ENCODE measurements at regions of chr1 and their contacts with region 1.

Region 1: DNA sequence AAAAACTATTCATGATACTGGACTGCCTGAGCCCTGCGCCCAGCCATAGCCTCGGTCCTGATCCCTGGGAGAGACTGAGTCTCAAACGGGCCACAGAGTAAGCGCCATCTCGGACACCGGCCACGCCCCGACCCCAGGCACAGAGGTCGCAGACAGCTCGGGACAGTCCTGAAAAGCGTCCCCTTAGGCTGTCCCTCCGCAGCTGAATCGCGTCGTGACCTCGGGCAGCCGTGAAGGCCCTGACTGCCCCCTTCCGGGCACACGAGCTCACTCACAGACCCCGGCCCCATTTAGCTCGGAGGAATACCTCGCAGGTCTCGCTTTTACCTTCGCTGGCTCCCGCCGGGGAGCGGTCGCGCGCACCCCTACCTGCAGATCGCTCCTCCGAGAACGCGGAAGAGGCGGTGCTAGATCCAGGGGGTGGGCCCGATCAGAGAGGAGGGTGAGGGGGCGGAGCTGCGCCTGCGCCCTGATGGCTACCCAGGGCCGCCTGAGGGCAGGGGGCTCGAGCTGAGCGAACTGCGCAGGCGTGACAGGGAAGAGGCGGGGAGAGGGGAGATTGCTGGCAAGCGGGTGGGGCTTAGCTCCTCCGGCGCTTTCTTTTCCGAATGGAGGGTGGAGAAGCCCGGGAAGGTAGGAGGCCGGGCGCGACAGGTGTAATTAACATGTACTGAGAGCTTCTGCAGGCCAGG is at the start of gene MKNK1:
- DNase-seq: peak; percentile 92
- ATAC-seq: peak; percentile 92
- H3K4me3 ChIP-seq: peak within 1 kb of the TSS; percentile 91 to 97 (median 92)
- H3K27ac ChIP-seq: peak within 1 kb of the TSS; percentile 56
- H3K4me1 ChIP-seq: peaks cover 44% of the 10 kb centered on the region
- H3K27me3 ChIP-seq: no peaks in the 10 kb centered on the region
- CTCF ChIP-seq: peak; percentile 56
- EP300 ChIP-seq: no peak
- POLR2A ChIP-seq: peak; percentile 69 to 96
- RAD21 ChIP-seq: peak; percentile 56
- total RNA-seq, gene MKNK1: 14.7 and 18.5 TPM in 2 replicates

Region 2: GRCh38 chr1:46616277-46617107 is 12.5 kb after region 1 on chr1 and contains the start of gene MOB3C:
- CTCF ChIA-PET with region 1: no interaction called
- POLR2A ChIA-PET with region 1: interaction called, 79 read pairs
- in situ Hi-C with region 1: no loop called
- intact Hi-C with region 1: no loop called
- DNase-seq: no peak
- ATAC-seq: peak; percentile 76
- H3K4me3 ChIP-seq: peak within 1 kb of the TSS; percentile 59 to 83 (median 78)
- H3K27ac ChIP-seq: peak within 1 kb of the TSS; percentile 51
- H3K4me1 ChIP-seq: peaks cover 38% of the 10 kb centered on the region
- H3K27me3 ChIP-seq: no peaks in the 10 kb centered on the region; a peak in 1 of 5 replicates
- CTCF ChIP-seq: no peak
- EP300 ChIP-seq: no peak
- POLR2A ChIP-seq: peak; percentile 41 to 60; a peak in 2 of 4 replicates
- RAD21 ChIP-seq: no peak
- total RNA-seq, gene MOB3C: 3.1 and 3.5 TPM in 2 replicates